WTC11 (cell line): ENCODE measurements at regions of chr17 and their contacts with region 1.

Region 1: DNA sequence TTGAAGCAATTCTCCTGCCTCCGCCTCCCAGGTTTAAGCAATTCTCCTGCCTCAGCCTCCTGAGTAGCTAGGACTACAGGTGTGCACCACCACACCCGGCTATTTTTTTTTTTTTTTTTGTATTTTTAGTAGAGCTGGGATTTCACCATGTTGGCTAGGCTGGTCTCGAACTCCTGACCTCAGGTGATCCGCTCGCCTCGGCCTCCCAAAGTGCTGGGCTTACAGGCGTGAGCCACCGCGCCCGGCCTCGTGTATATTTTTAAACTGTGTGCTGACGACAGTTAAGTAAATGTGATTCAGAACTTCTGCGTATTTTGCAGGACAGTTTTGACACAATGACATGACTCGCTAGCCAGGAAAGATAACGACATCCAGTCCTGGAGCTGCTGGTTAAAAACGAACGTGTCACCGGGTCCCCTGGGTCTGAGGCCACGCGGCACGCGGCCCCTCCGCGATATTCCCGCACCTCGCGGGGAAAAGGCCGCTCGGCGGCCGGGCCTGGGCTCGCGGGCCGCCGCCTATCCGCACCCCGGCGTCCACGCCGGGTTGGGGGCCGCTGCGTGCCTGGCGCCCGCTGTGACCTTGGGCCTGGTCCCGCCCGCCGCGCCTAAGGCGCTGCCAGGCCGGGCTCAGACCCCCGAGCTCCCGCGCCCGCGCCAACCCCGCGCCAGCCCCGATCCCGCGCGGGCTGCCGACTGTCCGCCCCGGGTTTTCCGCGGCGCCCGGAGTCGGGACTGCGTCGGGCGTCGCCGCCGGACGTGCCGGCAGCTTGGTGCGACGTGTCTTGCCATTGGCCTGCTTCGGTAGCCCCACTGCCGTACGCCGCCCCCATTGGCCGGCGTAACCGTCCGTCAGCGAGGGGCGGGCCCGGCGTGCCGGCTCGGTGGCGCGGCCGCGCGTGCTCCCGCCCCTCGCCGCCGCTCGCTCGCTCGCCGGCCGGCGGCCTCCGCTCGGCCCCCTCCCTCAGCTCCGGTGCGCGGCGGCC is at the start of gene FOXK2:
- DNase-seq: peak; percentile 89
- ATAC-seq: peak; percentile 100
- H3K4me3 Mint-ChIP-seq: peak within 1 kb of the TSS; percentile 93
- H3K27ac Mint-ChIP-seq: peak within 1 kb of the TSS; percentile 96
- H3K4me1 Mint-ChIP-seq: peaks cover 14% of the 10 kb centered on the region
- H3K27me3 Mint-ChIP-seq: peaks cover 5% of the 10 kb centered on the region; the same call in 1 of the 2 replicates
- CTCF ChIP-seq: no peak
- total RNA-seq, gene FOXK2: 57.7 to 65.7 TPM (median 62.7 TPM) in 3 replicates

Region 2: GRCh38 chr17:82457997-82458864 is 60.9 kb before region 1 on chr17 and contains the start of gene NARF:
- CTCF ChIA-PET with region 1: no interaction called
- POLR2A ChIA-PET with region 1: no interaction called
- DNase-seq: peak; percentile 96
- ATAC-seq: peak; percentile 100
- H3K4me3 Mint-ChIP-seq: peak within 1 kb of the TSS; percentile 94
- H3K27ac Mint-ChIP-seq: peak within 1 kb of the TSS; percentile 92
- H3K4me1 Mint-ChIP-seq: peaks cover 14% of the 10 kb centered on the region
- H3K27me3 Mint-ChIP-seq: peaks cover under 1% of the 10 kb centered on the region; the same call in 1 of the 2 replicates
- CTCF ChIP-seq: no peak
- total RNA-seq, gene NARF: 96.7 to 125 TPM (median 117 TPM) in 3 replicates

Region 3: DNA sequence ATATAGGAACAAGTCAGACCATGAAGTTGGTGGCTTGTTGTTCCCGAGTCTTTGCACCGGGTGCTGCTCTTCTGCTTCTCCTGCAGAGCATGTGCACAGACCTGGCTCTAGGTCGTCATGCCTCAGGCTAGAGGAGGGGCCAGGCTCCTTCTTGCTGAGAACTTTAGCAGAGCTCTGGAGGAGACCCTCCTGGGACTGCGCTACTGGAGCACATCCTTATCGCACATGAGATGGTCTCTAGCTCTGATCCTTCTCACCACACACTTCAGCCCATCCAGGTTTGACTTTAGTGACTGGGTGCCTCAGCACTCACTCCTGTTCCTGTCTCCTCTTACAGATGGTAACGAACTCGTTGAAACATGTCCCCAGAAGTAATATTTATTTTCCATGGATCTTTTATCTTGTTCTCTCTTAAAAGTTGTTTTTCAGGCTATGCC is 15.3 kb after region 1 on chr17:
- CTCF ChIA-PET with region 1: no interaction called
- POLR2A ChIA-PET with region 1: no interaction called
- DNase-seq: peak; percentile 27
- ATAC-seq: peak; percentile 64
- H3K4me3 Mint-ChIP-seq: no peak overlapping the region
- H3K27ac Mint-ChIP-seq: peak overlapping the region; percentile 86
- H3K4me1 Mint-ChIP-seq: peaks cover 48% of the 10 kb centered on the region
- H3K27me3 Mint-ChIP-seq: no peaks in the 10 kb centered on the region
- CTCF ChIP-seq: no peak

Region 4: DNA sequence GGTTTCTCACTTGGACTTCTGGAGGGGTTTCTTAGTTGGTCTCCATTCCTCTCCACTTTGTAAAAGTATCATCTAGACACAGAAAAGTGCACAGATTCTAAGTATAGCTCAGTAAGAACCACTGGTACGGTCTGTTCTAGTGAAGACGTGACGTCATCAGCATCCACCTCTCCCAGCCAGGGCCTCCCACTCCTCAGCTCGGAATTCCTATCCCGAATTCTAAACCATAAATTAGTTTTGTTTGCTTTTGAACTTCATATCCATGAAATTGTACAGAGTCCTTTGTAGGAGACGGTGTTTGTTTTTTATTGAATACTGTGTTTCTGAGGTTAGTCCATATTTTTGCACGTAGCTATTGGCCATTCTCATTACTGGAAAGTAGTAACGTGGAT is 25.9 kb after region 1 on chr17:
- CTCF ChIA-PET with region 1: interaction called, 12 read pairs
- POLR2A ChIA-PET with region 1: no interaction called
- DNase-seq: no peak
- ATAC-seq: no peak
- H3K4me3 Mint-ChIP-seq: no peak overlapping the region
- H3K27ac Mint-ChIP-seq: no peak overlapping the region
- H3K4me1 Mint-ChIP-seq: peaks cover 12% of the 10 kb centered on the region
- H3K27me3 Mint-ChIP-seq: no peaks in the 10 kb centered on the region
- CTCF ChIP-seq: no peak

Region 5: DNA sequence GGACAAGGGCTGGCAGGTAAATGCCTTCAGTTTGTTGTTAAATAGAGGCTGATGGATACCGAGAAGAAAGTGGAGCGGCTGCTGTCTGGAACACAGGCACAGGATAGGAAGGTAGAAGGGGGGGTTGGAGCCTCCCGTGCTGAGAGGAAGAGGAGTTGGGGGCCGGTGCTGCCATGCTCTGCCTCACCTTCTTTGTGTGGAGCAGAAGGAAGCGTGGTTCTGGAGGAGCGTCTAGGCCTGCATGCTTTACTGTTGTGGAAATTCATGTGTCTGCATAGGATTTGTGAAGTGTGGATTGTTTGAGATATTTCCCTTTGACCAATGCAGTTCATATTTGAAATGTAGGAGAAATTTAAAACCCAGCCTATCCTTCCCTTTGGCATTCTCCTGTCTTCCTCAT is 52.7 kb after region 1 on chr17:
- CTCF ChIA-PET with region 1: no interaction called
- POLR2A ChIA-PET with region 1: no interaction called
- DNase-seq: no peak
- ATAC-seq: no peak
- H3K4me3 Mint-ChIP-seq: no peak overlapping the region
- H3K27ac Mint-ChIP-seq: no peak overlapping the region
- H3K4me1 Mint-ChIP-seq: peaks cover 3% of the 10 kb centered on the region
- H3K27me3 Mint-ChIP-seq: no peaks in the 10 kb centered on the region
- CTCF ChIP-seq: no peak

Region 6: DNA sequence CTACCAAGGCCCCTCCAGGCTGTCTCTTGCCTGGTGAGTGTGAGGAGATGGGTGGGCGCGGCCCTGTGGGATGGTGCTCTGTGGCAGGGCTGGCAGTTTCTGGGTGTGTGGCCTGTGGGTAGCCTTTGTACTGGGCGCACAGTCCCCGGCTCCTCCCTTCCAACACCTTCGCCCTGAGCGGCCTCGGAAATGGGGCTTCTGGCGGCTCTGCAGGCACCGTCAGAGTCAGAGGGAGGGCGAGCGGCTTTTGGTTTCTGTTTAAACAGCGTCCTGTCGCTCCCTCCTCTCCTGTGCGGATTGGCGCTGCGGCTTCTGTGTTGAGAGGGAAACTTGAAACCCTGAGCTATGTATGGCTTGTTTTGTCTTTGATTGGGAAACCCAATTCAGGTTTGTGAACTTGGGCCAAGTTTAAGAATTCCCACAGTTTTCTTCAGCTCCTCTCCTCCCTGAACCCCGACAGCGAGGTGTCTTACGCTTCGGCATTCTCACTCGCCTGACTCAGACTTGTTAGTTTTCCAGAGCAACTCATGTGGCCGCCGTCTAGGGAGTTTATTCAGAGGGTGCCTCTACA is 329.0 kb after region 1 on chr17:
- CTCF ChIA-PET with region 1: no interaction called
- POLR2A ChIA-PET with region 1: no interaction called
- DNase-seq: no peak
- ATAC-seq: peak; percentile 53
- H3K4me3 Mint-ChIP-seq: no peak overlapping the region
- H3K27ac Mint-ChIP-seq: peak overlapping the region; percentile 83; the same call in 1 of the 2 replicates
- H3K4me1 Mint-ChIP-seq: peaks cover 8% of the 10 kb centered on the region
- H3K27me3 Mint-ChIP-seq: no peaks in the 10 kb centered on the region
- CTCF ChIP-seq: no peak